ENCODE measurements at regions of chr11 and their contacts with region 1.

Region 1: GRCh38 chr11:47578524-47579460 is at the starts of genes KBTBD4 and NDUFS3:
- DNase-seq: peak; percentile 90 to 94
- ATAC-seq: peak; percentile 97
- H3K4me3 ChIP-seq: peak within 1 kb of the TSS; percentile 74 to 98
- H3K27ac ChIP-seq: peak within 1 kb of the TSS in 1 of 2 donors; percentile 53
- H3K4me1 ChIP-seq: peaks cover 1 to 2% of the 10 kb centered on the region in 2 donors
- H3K27me3 ChIP-seq: no peaks in the 10 kb centered on the region
- total RNA-seq, gene KBTBD4: 11.1 to 13.5 TPM
- total RNA-seq, gene NDUFS3: 52.2 to 56.2 TPM

Region 2: GRCh38 chr11:47407746-47408590 is 170.8 kb before region 1 on chr11 and contains the start of gene SLC39A13:
- intact Hi-C with region 1: loop called in 1 of 2 experiments (anchors 10 kb)
- DNase-seq: peak; percentile 97 to 98
- ATAC-seq: peak; percentile 95
- H3K4me3 ChIP-seq: peak within 1 kb of the TSS; percentile 58
- H3K27ac ChIP-seq: peak within 1 kb of the TSS; percentile 78 to 94
- H3K4me1 ChIP-seq: no peaks in the 10 kb centered on the region
- H3K27me3 ChIP-seq: no peaks in the 10 kb centered on the region
- total RNA-seq, gene SLC39A13: 75.1 to 88.9 TPM